Heart right ventricle (tissue), 16 donors: ENCODE measurements at regions of chr4 and their contacts with region 1.

Region 1: GRCh38 chr4:10045481-10045880 is 24.2 kb upstream of the SLC2A9 start:
- DNase-seq: no peak
- ATAC-seq: no peak
- H3K4me3 ChIP-seq: no peak overlapping the region
- H3K27ac ChIP-seq: peak overlapping the region in 1 of 10 donors; percentile 50
- H3K4me1 ChIP-seq: peaks cover 0 to 22% (median 0%) of the 10 kb centered on the region in 9 donors
- H3K27me3 ChIP-seq: no peaks in the 10 kb centered on the region
- CTCF ChIP-seq: no peak

Region 2: DNA sequence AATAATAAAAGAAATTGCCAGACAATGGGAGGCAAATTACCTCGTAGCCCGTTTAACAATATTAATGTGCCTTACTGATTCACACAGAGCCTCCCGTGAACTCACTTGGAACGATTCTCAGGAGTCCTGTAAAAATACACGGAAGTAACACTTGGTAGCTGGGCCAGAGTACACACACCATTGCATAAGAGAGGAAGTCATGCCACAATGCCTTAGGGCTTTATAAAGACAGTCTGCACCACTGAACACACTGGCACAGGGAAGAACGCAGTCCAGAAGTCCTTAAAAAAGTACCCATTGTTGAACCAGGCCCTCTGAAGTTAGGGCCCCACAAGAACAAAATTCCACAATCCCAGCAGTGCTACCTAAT is 39.3 kb before region 1 on chr4:
- intact Hi-C with region 1: no loop called
- DNase-seq: peak in 1 of 2 donors; percentile 24
- ATAC-seq: peak; percentile 82 to 95 (median 87)
- H3K4me3 ChIP-seq: no peak overlapping the region
- H3K27ac ChIP-seq: peak overlapping the region in 7 of 10 donors; percentile 16 to 76 (median 55)
- H3K4me1 ChIP-seq: peaks cover 4 to 55% (median 40%) of the 10 kb centered on the region in 9 donors
- H3K27me3 ChIP-seq: no peaks in the 10 kb centered on the region
- CTCF ChIP-seq: no peak

Region 3: GRCh38 chr4:10296730-10297129 is 251.2 kb after region 1 on chr4:
- intact Hi-C with region 1: no loop called
- DNase-seq: no peak
- ATAC-seq: peak in 4 of 8 donors; percentile 58 to 90 (median 64)
- H3K4me3 ChIP-seq: no peak overlapping the region
- H3K27ac ChIP-seq: peak overlapping the region in 1 of 10 donors; percentile 32
- H3K4me1 ChIP-seq: peaks cover 0 to 10% (median 0%) of the 10 kb centered on the region in 9 donors
- H3K27me3 ChIP-seq: peaks cover 0 to 4% (median 0%) of the 10 kb centered on the region in 7 donors
- CTCF ChIP-seq: no peak

Region 4: DNA sequence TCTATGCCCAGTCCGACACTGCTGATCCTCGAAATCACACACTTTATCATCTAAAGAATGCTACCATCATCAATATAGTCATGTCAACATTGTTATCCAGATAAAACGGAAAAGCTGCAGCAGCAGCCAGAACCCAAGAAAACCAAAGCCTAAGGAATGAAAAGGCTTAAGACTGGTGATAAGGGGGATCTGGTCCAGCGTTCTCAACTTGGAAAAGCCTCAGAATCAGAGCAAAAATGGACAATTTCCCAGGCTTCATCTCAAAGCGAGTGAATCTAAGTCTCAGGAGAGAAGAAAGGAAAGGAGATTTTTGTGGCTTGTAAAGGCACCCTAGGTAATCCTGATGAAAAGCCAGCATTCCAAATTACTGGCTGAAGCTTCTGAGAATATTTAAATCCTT is 403.5 kb after region 1 on chr4:
- intact Hi-C with region 1: loop called in 1 of 10 experiments (anchors 5 kb)
- DNase-seq: no peak
- ATAC-seq: no peak
- H3K4me3 ChIP-seq: no peak overlapping the region
- H3K27ac ChIP-seq: no peak overlapping the region
- H3K4me1 ChIP-seq: peaks cover 0 to 4% (median 0%) of the 10 kb centered on the region in 9 donors
- H3K27me3 ChIP-seq: no peaks in the 10 kb centered on the region
- CTCF ChIP-seq: no peak